ENCODE measurements at regions of chr2 and their contacts with region 1.

Region 1: DNA sequence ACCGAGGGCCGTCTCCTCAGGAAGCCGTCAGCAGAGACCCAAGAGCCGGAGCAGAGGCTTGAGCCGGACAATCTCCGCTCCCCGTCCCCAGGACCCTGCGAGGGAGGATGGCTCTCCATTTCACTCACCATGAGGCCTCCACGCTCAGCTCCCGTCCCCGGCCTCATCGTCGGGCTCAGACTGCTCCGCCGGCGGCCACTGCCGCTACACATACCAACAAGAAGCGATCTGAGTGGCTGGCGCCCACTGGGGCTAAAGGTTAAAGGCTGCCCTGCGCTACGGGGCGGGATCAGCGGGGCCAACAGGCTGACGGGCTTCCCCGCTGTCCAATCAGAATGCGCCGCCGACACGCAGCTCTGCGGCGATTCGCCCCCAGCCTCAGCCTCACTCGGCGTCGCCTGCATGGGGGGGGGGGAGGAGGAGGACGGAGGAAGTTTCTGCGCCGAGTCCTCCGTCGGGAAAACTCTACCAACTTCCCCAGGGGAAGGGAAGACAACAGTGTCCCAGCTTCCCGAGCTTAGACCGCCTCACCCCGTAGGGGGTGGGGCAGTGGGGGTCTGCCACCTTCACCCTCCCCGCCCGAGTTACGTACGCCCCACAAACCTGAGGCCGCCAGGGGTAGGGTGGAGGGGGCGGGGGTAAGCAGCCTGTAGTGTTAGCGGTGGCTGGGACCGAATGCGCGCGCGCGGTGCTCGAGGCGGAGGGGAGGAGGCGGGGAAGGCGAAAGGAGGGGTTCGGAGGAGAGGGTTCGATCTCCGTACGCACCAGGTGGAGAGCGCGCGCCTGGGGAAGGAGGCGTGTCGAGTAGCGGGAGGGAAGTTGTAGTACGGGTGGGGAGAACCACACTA is at the start of gene PRPF40A:
- DNase-seq: peak; percentile 96 to 99 (median 99)
- ATAC-seq: peak; percentile 78 to 82 (median 80)
- H3K4me3 ChIP-seq: peak within 1 kb of the TSS; percentile 78 to 96
- H3K4me3 Mint-ChIP-seq: peak within 1 kb of the TSS; percentile 96 to 100 (median 100)
- H3K27ac ChIP-seq: peak within 1 kb of the TSS; percentile 97
- H3K27ac Mint-ChIP-seq: peak within 1 kb of the TSS; percentile 93 to 99
- H3K4me1 ChIP-seq: peaks cover 18 to 22% of the 10 kb centered on the region in 2 experiments
- H3K4me1 Mint-ChIP-seq: peaks cover 70 to 76% (median 74%) of the 10 kb centered on the region in 3 donors
- H3K27me3 ChIP-seq: no peaks in the 10 kb centered on the region
- H3K27me3 Mint-ChIP-seq: no peaks in the 10 kb centered on the region
- total RNA-seq, gene PRPF40A: 101 to 124 (median 106) TPM

Region 2: GRCh38 chr2:152175458-152176325 is 541.8 kb before region 1 on chr2 and contains the start of gene STAM2:
- CTCF ChIA-PET with region 1: interaction called in 1 of 2 experiments, 11 read pairs
- POLR2A ChIA-PET with region 1: no interaction called
- DNase-seq: peak; percentile 78 to 95 (median 88)
- ATAC-seq: peak; percentile 88 to 93 (median 89)
- H3K4me3 ChIP-seq: peak within 1 kb of the TSS; percentile 81 to 98
- H3K4me3 Mint-ChIP-seq: peak within 1 kb of the TSS; percentile 98 to 99 (median 98)
- H3K27ac ChIP-seq: peak within 1 kb of the TSS; percentile 87
- H3K27ac Mint-ChIP-seq: peak within 1 kb of the TSS; percentile 99 to 100
- H3K4me1 ChIP-seq: peaks cover 8 to 17% of the 10 kb centered on the region in 2 experiments
- H3K4me1 Mint-ChIP-seq: peaks cover 34 to 40% (median 38%) of the 10 kb centered on the region in 3 donors
- H3K27me3 ChIP-seq: no peaks in the 10 kb centered on the region
- H3K27me3 Mint-ChIP-seq: peaks cover 2 to 10% of the 10 kb centered on the region in 2 donors
- total RNA-seq, gene STAM2: 12.0 to 20.8 (median 19.3) TPM

Region 3: GRCh38 chr2:152186262-152186661 is 531.2 kb before region 1 on chr2:
- CTCF ChIA-PET with region 1: no interaction called
- POLR2A ChIA-PET with region 1: interaction called in 1 of 2 experiments, 10 read pairs
- DNase-seq: no peak
- ATAC-seq: no peak
- H3K4me3 ChIP-seq: no peak overlapping the region
- H3K4me3 Mint-ChIP-seq: no peak overlapping the region
- H3K27ac ChIP-seq: no peak overlapping the region
- H3K27ac Mint-ChIP-seq: no peak overlapping the region
- H3K4me1 ChIP-seq: no peaks in the 10 kb centered on the region
- H3K4me1 Mint-ChIP-seq: peaks cover 7 to 14% (median 8%) of the 10 kb centered on the region in 3 donors
- H3K27me3 ChIP-seq: peaks cover 0 to 8% of the 10 kb centered on the region in 2 experiments
- H3K27me3 Mint-ChIP-seq: peaks cover 11 to 24% of the 10 kb centered on the region in 2 donors

Region 4: GRCh38 chr2:152485954-152486736 is 231.3 kb before region 1 on chr2:
- CTCF ChIA-PET with region 1: no interaction called
- POLR2A ChIA-PET with region 1: no interaction called
- DNase-seq: no peak
- ATAC-seq: no peak
- H3K4me3 ChIP-seq: no peak overlapping the region
- H3K4me3 Mint-ChIP-seq: no peak overlapping the region
- H3K27ac ChIP-seq: no peak overlapping the region
- H3K27ac Mint-ChIP-seq: no peak overlapping the region
- H3K4me1 ChIP-seq: no peaks in the 10 kb centered on the region
- H3K4me1 Mint-ChIP-seq: no peaks in the 10 kb centered on the region
- H3K27me3 ChIP-seq: no peaks in the 10 kb centered on the region
- H3K27me3 Mint-ChIP-seq: peaks cover 4% of the 10 kb centered on the region in 2 donors

Region 5: GRCh38 chr2:152525277-152525838 is 192.1 kb before region 1 on chr2:
- CTCF ChIA-PET with region 1: no interaction called
- POLR2A ChIA-PET with region 1: no interaction called
- DNase-seq: no peak
- ATAC-seq: no peak
- H3K4me3 ChIP-seq: no peak overlapping the region
- H3K4me3 Mint-ChIP-seq: no peak overlapping the region
- H3K27ac ChIP-seq: no peak overlapping the region
- H3K27ac Mint-ChIP-seq: no peak overlapping the region
- H3K4me1 ChIP-seq: no peaks in the 10 kb centered on the region
- H3K4me1 Mint-ChIP-seq: no peaks in the 10 kb centered on the region
- H3K27me3 ChIP-seq: no peaks in the 10 kb centered on the region
- H3K27me3 Mint-ChIP-seq: peaks cover 0 to 4% of the 10 kb centered on the region in 2 donors

Region 6: GRCh38 chr2:152611458-152612231 is 105.8 kb before region 1 on chr2:
- CTCF ChIA-PET with region 1: no interaction called
- POLR2A ChIA-PET with region 1: no interaction called
- DNase-seq: peak in 1 of 35 experiments; percentile 25
- ATAC-seq: no peak
- H3K4me3 ChIP-seq: no peak overlapping the region
- H3K4me3 Mint-ChIP-seq: no peak overlapping the region
- H3K27ac ChIP-seq: peak overlapping the region; percentile 11
- H3K27ac Mint-ChIP-seq: peak overlapping the region in 1 of 2 donors; percentile 16
- H3K4me1 ChIP-seq: peaks cover 0 to 9% of the 10 kb centered on the region in 2 experiments
- H3K4me1 Mint-ChIP-seq: peaks cover 0 to 17% (median 6%) of the 10 kb centered on the region in 3 donors
- H3K27me3 ChIP-seq: no peaks in the 10 kb centered on the region
- H3K27me3 Mint-ChIP-seq: no peaks in the 10 kb centered on the region

Region 7: DNA sequence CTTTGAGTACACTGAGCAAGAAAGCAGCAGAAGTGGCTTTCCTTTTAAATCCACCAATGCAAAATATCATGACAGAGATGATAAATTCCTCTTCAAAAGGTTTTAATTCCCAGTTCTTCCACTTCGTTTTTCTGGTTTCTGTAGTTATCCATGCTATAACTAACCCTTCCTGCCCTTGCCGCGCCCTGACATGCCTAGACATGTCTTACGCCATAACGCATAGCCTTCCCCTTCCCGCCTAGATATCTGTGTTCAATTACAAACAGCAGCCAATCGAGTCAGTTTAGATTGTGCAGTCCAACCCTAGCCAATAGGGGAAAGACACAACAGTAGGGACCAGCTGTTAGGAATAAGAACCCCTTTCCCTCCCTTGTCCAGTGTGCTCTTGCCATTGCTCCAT is 16.3 kb before region 1 on chr2:
- CTCF ChIA-PET with region 1: interaction called, 3 to 8 read pairs
- POLR2A ChIA-PET with region 1: interaction called, 7 to 13 read pairs
- DNase-seq: no peak
- ATAC-seq: no peak
- H3K4me3 ChIP-seq: no peak overlapping the region
- H3K4me3 Mint-ChIP-seq: no peak overlapping the region
- H3K27ac ChIP-seq: no peak overlapping the region
- H3K27ac Mint-ChIP-seq: peak overlapping the region in 1 of 2 donors; percentile 4
- H3K4me1 ChIP-seq: peaks cover 0 to 3% of the 10 kb centered on the region in 2 experiments
- H3K4me1 Mint-ChIP-seq: peaks cover 59 to 77% (median 74%) of the 10 kb centered on the region in 3 donors
- H3K27me3 ChIP-seq: no peaks in the 10 kb centered on the region
- H3K27me3 Mint-ChIP-seq: no peaks in the 10 kb centered on the region

Region 8: GRCh38 chr2:152730591-152731303 is 13.3 kb after region 1 on chr2:
- CTCF ChIA-PET with region 1: interaction called, 3 to 4 read pairs
- POLR2A ChIA-PET with region 1: interaction called, 9 to 13 read pairs
- DNase-seq: peak in 34 of 35 experiments; percentile 11 to 79 (median 38)
- ATAC-seq: peak; percentile 89 to 98 (median 98)
- H3K4me3 ChIP-seq: no peak overlapping the region
- H3K4me3 Mint-ChIP-seq: peak overlapping the region in 1 of 3 donors; percentile 0
- H3K27ac ChIP-seq: no peak overlapping the region
- H3K27ac Mint-ChIP-seq: peak overlapping the region in 1 of 2 donors; percentile 32
- H3K4me1 ChIP-seq: peaks cover 13 to 16% of the 10 kb centered on the region in 2 experiments
- H3K4me1 Mint-ChIP-seq: peaks cover 30 to 42% (median 31%) of the 10 kb centered on the region in 3 donors
- H3K27me3 ChIP-seq: no peaks in the 10 kb centered on the region
- H3K27me3 Mint-ChIP-seq: no peaks in the 10 kb centered on the region

Region 9: GRCh38 chr2:152743002-152743401 is 25.6 kb after region 1 on chr2:
- CTCF ChIA-PET with region 1: interaction called, 3 to 13 read pairs
- POLR2A ChIA-PET with region 1: no interaction called
- DNase-seq: peak in 1 of 35 experiments; percentile 21
- ATAC-seq: no peak
- H3K4me3 ChIP-seq: no peak overlapping the region
- H3K4me3 Mint-ChIP-seq: no peak overlapping the region
- H3K27ac ChIP-seq: no peak overlapping the region
- H3K27ac Mint-ChIP-seq: no peak overlapping the region
- H3K4me1 ChIP-seq: no peaks in the 10 kb centered on the region
- H3K4me1 Mint-ChIP-seq: peaks cover 0 to 4% (median 2%) of the 10 kb centered on the region in 3 donors
- H3K27me3 ChIP-seq: no peaks in the 10 kb centered on the region
- H3K27me3 Mint-ChIP-seq: no peaks in the 10 kb centered on the region

Region 10: GRCh38 chr2:152804687-152805408 is 87.4 kb after region 1 on chr2:
- CTCF ChIA-PET with region 1: no interaction called
- POLR2A ChIA-PET with region 1: no interaction called
- DNase-seq: no peak
- ATAC-seq: no peak
- H3K4me3 ChIP-seq: no peak overlapping the region
- H3K4me3 Mint-ChIP-seq: no peak overlapping the region
- H3K27ac ChIP-seq: no peak overlapping the region
- H3K27ac Mint-ChIP-seq: no peak overlapping the region
- H3K4me1 ChIP-seq: no peaks in the 10 kb centered on the region
- H3K4me1 Mint-ChIP-seq: peaks cover 0 to 7% (median 4%) of the 10 kb centered on the region in 3 donors
- H3K27me3 ChIP-seq: no peaks in the 10 kb centered on the region
- H3K27me3 Mint-ChIP-seq: peaks cover 2 to 4% of the 10 kb centered on the region in 2 donors